Activated CD4-positive, alpha-beta T cell treated with anti-CD3 and anti-CD28 coated beads, Interleukin-2, amount 10 ng/mL, durations not matched to agents 24 days and 14 days (primary cell): ENCODE measurements at regions of chr3 and their contacts with region 1.

Region 1: DNA sequence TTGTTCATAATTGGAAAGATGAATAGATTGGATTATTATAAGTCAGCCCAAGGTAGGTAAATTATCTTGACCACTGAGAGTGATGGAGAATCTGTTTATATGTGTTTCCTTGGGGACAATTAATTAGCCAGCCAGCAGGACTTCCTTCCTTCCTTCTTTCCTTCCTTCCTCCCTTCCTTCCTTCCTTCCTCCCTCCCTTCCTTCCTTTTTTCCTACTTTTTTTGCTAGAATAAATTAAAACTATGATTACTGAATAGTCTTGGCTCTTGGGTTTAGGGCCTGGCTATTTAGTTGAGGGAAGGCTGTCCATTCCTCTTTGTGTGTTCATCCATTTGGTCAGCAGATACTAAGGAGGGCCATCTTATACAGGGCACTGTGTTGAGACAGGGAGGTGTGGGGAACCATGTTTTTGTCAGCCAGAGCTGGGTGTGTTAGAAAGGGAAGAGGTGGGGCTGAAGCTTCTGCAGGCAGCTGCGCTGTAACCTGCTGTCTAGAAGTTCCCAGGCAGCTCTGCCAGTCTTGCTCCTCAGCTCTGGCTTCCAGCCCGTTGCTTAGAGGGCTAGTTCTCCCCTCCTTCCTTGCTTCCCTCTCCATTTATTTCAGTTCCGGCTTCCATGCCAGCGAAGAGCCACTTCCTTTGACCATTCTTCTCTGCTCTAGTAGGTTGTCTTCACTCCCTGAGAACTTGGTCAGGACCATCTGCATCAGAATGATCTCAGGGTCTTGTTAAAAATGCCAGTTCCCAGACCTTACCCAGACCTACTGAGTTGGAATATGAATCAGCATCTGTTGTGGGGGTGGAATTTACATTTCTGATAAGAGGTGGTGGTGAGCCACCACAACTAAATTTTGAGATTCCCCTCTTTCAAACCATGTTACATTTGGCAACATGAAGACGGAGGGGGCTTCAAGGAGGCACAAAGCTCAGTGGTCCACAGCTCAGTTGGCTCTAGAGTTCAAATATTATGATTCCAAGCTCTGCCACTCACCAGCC is 113.9 kb downstream of the DGKG start:
- DNase-seq: no peak
- H3K4me3 Mint-ChIP-seq: no peak overlapping the region
- H3K27ac Mint-ChIP-seq: no peak overlapping the region
- H3K4me1 Mint-ChIP-seq: peaks cover 5% of the 10 kb centered on the region
- H3K27me3 Mint-ChIP-seq: peaks cover 26% of the 10 kb centered on the region

Region 2: GRCh38 chr3:186259612-186260383 is 11.7 kb after region 1 on chr3:
- intact Hi-C with region 1: loop called (anchors 1 kb)
- DNase-seq: peak; percentile 86
- H3K4me3 Mint-ChIP-seq: peak overlapping the region; percentile 46
- H3K27ac Mint-ChIP-seq: peak overlapping the region; percentile 76
- H3K4me1 Mint-ChIP-seq: peaks cover 20% of the 10 kb centered on the region
- H3K27me3 Mint-ChIP-seq: peaks cover 5% of the 10 kb centered on the region